Caco-2 (cell line): ENCODE measurements at regions of chr6 and their contacts with region 1.

Region 1: GRCh38 chr6:166156942-166157341 is 10.7 kb downstream of the TBXT start:
- DNase-seq: no peak
- H3K4me3 ChIP-seq: no peak overlapping the region
- H3K4me3 Mint-ChIP-seq: no peak overlapping the region
- H3K27ac Mint-ChIP-seq: no peak overlapping the region
- H3K4me1 ChIP-seq: no peaks in the 10 kb centered on the region
- H3K4me1 Mint-ChIP-seq: no peaks in the 10 kb centered on the region
- H3K27me3 ChIP-seq: no peaks in the 10 kb centered on the region; the same call in 1 of the 2 replicates
- H3K27me3 Mint-ChIP-seq: peaks cover 2% of the 10 kb centered on the region
- CTCF ChIP-seq: peak; percentile 43 to 44

Region 2: GRCh38 chr6:165922309-165922794 is 234.6 kb before region 1 on chr6:
- CTCF ChIA-PET with region 1: no interaction called
- POLR2A ChIA-PET with region 1: no interaction called
- intact Hi-C with region 1: no loop called
- DNase-seq: no peak
- H3K4me3 ChIP-seq: no peak overlapping the region
- H3K4me3 Mint-ChIP-seq: no peak overlapping the region
- H3K27ac Mint-ChIP-seq: no peak overlapping the region
- H3K4me1 ChIP-seq: no peaks in the 10 kb centered on the region
- H3K4me1 Mint-ChIP-seq: no peaks in the 10 kb centered on the region
- H3K27me3 ChIP-seq: no peaks in the 10 kb centered on the region
- H3K27me3 Mint-ChIP-seq: peaks cover under 1% of the 10 kb centered on the region
- CTCF ChIP-seq: no peak

Region 3: DNA sequence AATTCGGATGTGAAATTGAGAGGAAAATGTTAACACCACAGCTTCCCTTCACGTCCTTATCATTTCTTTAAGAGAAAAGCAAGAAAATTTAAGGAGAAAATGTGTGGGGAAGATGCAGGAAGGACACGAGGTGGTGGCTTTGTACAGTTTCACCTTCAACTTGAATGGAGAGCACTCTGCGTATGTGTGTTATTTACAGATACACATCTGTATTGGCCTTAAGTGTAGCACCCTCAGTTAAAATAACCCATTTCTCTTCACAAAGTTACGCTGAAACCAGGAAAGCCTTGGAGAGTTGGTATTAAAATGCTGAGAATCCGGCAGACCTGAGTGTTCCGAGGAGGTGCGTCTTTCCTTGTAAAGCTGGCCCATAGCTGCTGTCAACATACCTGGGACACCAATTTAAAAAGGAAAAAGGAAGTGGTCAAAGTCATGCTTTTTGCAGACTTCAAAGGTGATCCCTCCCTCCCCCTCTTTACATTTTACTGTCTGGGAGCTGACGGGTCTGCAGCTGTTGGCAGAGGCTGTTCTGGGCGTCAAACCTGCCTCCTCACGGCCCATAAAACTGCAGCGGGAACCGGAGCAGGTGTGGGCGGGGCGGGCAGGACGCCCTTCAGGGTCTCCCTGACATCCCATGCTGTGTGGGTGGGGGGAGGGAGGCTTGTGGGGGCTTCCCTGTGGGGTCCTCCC is 72.0 kb after region 1 on chr6:
- CTCF ChIA-PET with region 1: no interaction called
- POLR2A ChIA-PET with region 1: no interaction called
- intact Hi-C with region 1: no loop called
- DNase-seq: no peak
- H3K4me3 ChIP-seq: no peak overlapping the region
- H3K4me3 Mint-ChIP-seq: no peak overlapping the region
- H3K27ac Mint-ChIP-seq: no peak overlapping the region
- H3K4me1 ChIP-seq: no peaks in the 10 kb centered on the region
- H3K4me1 Mint-ChIP-seq: no peaks in the 10 kb centered on the region
- H3K27me3 ChIP-seq: 0 out of 2 replicates have a peak, but pooled peaks cover 1% of the 10 kb centered on the region
- H3K27me3 Mint-ChIP-seq: peaks cover 16% of the 10 kb centered on the region
- CTCF ChIP-seq: no peak

Region 4: GRCh38 chr6:166275714-166276166 is 118.8 kb after region 1 on chr6:
- CTCF ChIA-PET with region 1: no interaction called
- POLR2A ChIA-PET with region 1: no interaction called
- intact Hi-C with region 1: loop called (anchors 5 kb)
- DNase-seq: peak in 1 of 2 experiments; percentile 84
- H3K4me3 ChIP-seq: no peak overlapping the region
- H3K4me3 Mint-ChIP-seq: no peak overlapping the region
- H3K27ac Mint-ChIP-seq: no peak overlapping the region
- H3K4me1 ChIP-seq: no peaks in the 10 kb centered on the region
- H3K4me1 Mint-ChIP-seq: no peaks in the 10 kb centered on the region
- H3K27me3 ChIP-seq: no peaks in the 10 kb centered on the region
- H3K27me3 Mint-ChIP-seq: no peaks in the 10 kb centered on the region
- CTCF ChIP-seq: peak; percentile 96 to 99